CD8-positive, alpha-beta T cell (primary cell): ENCODE measurements at regions of chr7 and their contacts with region 1.

Region 1: DNA sequence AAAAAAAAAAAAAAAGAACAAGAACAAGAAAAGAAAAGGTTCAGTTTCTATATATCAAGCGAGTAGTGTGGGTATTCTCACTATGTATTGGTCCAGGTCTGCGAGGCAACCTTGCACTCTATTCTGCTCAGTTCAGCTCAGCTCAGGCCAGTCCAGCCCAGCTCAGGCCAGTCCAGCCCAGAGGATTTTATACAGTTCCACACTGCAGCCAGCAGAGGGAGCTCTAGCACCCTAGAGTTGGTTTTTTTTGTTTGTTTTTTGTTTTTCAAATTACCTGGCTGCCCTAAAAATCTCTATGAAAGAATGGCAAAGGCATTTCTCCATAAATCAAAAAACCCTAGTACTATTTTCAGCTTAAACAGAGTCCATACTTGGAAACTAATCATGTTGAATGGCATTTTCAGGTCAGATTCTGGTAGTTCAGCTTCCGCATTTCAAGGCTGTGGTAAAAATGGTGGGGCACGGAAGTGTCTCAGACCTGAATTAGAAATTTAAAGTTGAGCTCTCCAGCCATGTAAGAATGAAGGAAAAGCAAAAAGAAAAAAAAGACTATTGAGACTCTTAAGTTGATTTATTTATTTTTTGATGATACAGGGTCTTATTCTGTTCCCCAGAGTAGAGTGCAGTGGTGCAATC is 55.2 kb upstream of the GSDME start:
- DNase-seq: peak in 7 of 9 experiments; percentile 33 to 67 (median 52)
- ATAC-seq: peak; percentile 66
- H3K4me3 ChIP-seq: no peak overlapping the region
- H3K4me3 Mint-ChIP-seq: no peak overlapping the region
- H3K27ac ChIP-seq: no peak overlapping the region
- H3K27ac Mint-ChIP-seq: no peak overlapping the region
- H3K4me1 ChIP-seq: no peaks in the 10 kb centered on the region
- H3K4me1 Mint-ChIP-seq: no peaks in the 10 kb centered on the region
- H3K27me3 ChIP-seq: no peaks in the 10 kb centered on the region
- H3K27me3 Mint-ChIP-seq: no peaks in the 10 kb centered on the region
- CTCF ChIP-seq: peak; percentile 90

Region 2: GRCh38 chr7:24800667-24801066 is 11.8 kb before region 1 on chr7:
- CTCF ChIA-PET with region 1: interaction called, 14 read pairs
- POLR2A ChIA-PET with region 1: no interaction called
- intact Hi-C with region 1: no loop called
- DNase-seq: no peak
- ATAC-seq: no peak
- H3K4me3 ChIP-seq: no peak overlapping the region
- H3K4me3 Mint-ChIP-seq: no peak overlapping the region
- H3K27ac ChIP-seq: no peak overlapping the region
- H3K27ac Mint-ChIP-seq: no peak overlapping the region
- H3K4me1 ChIP-seq: no peaks in the 10 kb centered on the region
- H3K4me1 Mint-ChIP-seq: peaks cover 2% of the 10 kb centered on the region
- H3K27me3 ChIP-seq: no peaks in the 10 kb centered on the region
- H3K27me3 Mint-ChIP-seq: no peaks in the 10 kb centered on the region
- CTCF ChIP-seq: no peak

Region 3: GRCh38 chr7:24825931-24826661 is 13.7 kb after region 1 on chr7:
- CTCF ChIA-PET with region 1: interaction called, 53 read pairs
- POLR2A ChIA-PET with region 1: no interaction called
- intact Hi-C with region 1: no loop called
- DNase-seq: peak in 4 of 9 experiments; percentile 8 to 36 (median 18)
- ATAC-seq: peak; percentile 1
- H3K4me3 ChIP-seq: peak overlapping the region in 1 of 2 experiments; percentile 3
- H3K4me3 Mint-ChIP-seq: peak overlapping the region; percentile 9
- H3K27ac ChIP-seq: peak overlapping the region in 1 of 2 experiments; percentile 27
- H3K27ac Mint-ChIP-seq: peak overlapping the region; percentile 94
- H3K4me1 ChIP-seq: peaks cover 39% of the 10 kb centered on the region
- H3K4me1 Mint-ChIP-seq: peaks cover 46% of the 10 kb centered on the region
- H3K27me3 ChIP-seq: no peaks in the 10 kb centered on the region
- H3K27me3 Mint-ChIP-seq: no peaks in the 10 kb centered on the region
- CTCF ChIP-seq: no peak

Region 4: GRCh38 chr7:25069900-25070443 is 257.5 kb after region 1 on chr7:
- CTCF ChIA-PET with region 1: interaction called, 59 read pairs
- POLR2A ChIA-PET with region 1: no interaction called
- intact Hi-C with region 1: loop called (anchors 1 kb)
- DNase-seq: peak in 8 of 9 experiments; percentile 7 to 80 (median 47)
- ATAC-seq: peak; percentile 57
- H3K4me3 ChIP-seq: no peak overlapping the region
- H3K4me3 Mint-ChIP-seq: no peak overlapping the region
- H3K27ac ChIP-seq: no peak overlapping the region
- H3K27ac Mint-ChIP-seq: no peak overlapping the region
- H3K4me1 ChIP-seq: no peaks in the 10 kb centered on the region
- H3K4me1 Mint-ChIP-seq: no peaks in the 10 kb centered on the region
- H3K27me3 ChIP-seq: no peaks in the 10 kb centered on the region
- H3K27me3 Mint-ChIP-seq: no peaks in the 10 kb centered on the region
- CTCF ChIP-seq: peak; percentile 88